ENCODE measurements at regions of chr6 and their contacts with region 1.

Region 1: DNA sequence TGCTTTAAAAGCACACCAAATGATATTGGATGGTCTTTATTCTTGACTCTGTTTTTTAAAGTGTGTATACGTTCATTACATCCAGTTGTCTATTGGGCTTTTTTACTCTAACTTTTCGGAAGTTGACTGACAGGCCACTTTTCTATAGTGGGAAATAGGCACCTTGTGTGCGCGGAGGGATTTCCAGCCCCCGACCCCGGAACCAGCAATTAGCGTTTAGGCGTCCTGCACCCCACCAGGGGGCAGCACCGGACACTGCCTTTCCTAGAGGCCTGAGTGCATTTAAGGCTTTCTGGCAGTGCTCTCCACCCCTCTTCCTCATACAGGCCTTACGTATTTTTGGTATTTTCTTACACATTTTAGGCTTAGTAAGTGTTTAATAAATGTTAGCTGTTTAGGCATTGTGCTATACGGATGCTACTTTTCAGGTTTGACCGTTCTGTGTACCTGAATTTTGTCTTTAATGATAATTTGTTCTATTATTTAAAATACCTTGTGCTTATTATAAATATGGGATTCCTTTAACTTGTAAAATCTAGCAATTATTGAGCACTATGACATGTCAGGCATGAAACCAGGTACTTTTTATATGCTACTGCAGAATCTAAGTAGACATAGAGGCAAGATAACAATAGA is 231.8 kb downstream of the BCKDHB start:
- DNase-seq: peak; percentile 70
- H3K4me3 Mint-ChIP-seq: no peak overlapping the region
- H3K27ac Mint-ChIP-seq: no peak overlapping the region
- H3K4me1 Mint-ChIP-seq: no peaks in the 10 kb centered on the region
- H3K27me3 Mint-ChIP-seq: no peaks in the 10 kb centered on the region

Region 2: DNA sequence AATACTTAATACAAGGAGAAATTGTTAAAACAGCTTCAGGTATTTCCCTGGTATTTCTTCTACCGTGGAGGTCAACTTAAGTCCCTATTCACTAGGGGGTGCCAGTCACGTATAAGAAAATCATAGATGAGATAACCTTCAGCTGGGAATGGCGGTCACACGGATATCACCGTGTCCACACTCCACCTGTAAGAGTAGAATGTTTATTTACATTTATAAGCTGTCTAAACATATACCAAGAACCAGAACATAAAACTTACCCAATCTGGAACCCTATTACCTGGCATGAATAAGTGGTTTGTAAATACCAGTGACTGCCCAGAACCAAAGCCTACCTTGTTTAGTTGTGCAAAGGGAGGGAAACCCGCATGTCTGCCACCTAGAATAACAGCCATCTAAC is 389.1 kb before region 1 on chr6:
- CTCF ChIA-PET with region 1: no interaction called
- intact Hi-C with region 1: loop called (anchors 10 kb)
- DNase-seq: peak; percentile 83
- H3K4me3 Mint-ChIP-seq: no peak overlapping the region
- H3K27ac Mint-ChIP-seq: no peak overlapping the region
- H3K4me1 Mint-ChIP-seq: peaks cover 14% of the 10 kb centered on the region
- H3K27me3 Mint-ChIP-seq: peaks cover 34% of the 10 kb centered on the region

Region 3: GRCh38 chr6:80133020-80133419 is 205.3 kb before region 1 on chr6:
- CTCF ChIA-PET with region 1: no interaction called
- intact Hi-C with region 1: loop called (anchors 10 kb)
- DNase-seq: peak; percentile 42
- H3K4me3 Mint-ChIP-seq: no peak overlapping the region
- H3K27ac Mint-ChIP-seq: no peak overlapping the region
- H3K4me1 Mint-ChIP-seq: no peaks in the 10 kb centered on the region
- H3K27me3 Mint-ChIP-seq: no peaks in the 10 kb centered on the region

Region 4: GRCh38 chr6:80214436-80215022 is 123.8 kb before region 1 on chr6:
- CTCF ChIA-PET with region 1: no interaction called
- intact Hi-C with region 1: loop called (anchors 5 kb)
- DNase-seq: peak; percentile 14
- H3K4me3 Mint-ChIP-seq: no peak overlapping the region
- H3K27ac Mint-ChIP-seq: no peak overlapping the region
- H3K4me1 Mint-ChIP-seq: peaks cover 5% of the 10 kb centered on the region
- H3K27me3 Mint-ChIP-seq: no peaks in the 10 kb centered on the region

Region 5: GRCh38 chr6:80282913-80283554 is 55.3 kb before region 1 on chr6:
- CTCF ChIA-PET with region 1: no interaction called
- intact Hi-C with region 1: no loop called
- DNase-seq: no peak
- H3K4me3 Mint-ChIP-seq: no peak overlapping the region
- H3K27ac Mint-ChIP-seq: no peak overlapping the region
- H3K4me1 Mint-ChIP-seq: peaks cover 18% of the 10 kb centered on the region
- H3K27me3 Mint-ChIP-seq: no peaks in the 10 kb centered on the region

Region 6: DNA sequence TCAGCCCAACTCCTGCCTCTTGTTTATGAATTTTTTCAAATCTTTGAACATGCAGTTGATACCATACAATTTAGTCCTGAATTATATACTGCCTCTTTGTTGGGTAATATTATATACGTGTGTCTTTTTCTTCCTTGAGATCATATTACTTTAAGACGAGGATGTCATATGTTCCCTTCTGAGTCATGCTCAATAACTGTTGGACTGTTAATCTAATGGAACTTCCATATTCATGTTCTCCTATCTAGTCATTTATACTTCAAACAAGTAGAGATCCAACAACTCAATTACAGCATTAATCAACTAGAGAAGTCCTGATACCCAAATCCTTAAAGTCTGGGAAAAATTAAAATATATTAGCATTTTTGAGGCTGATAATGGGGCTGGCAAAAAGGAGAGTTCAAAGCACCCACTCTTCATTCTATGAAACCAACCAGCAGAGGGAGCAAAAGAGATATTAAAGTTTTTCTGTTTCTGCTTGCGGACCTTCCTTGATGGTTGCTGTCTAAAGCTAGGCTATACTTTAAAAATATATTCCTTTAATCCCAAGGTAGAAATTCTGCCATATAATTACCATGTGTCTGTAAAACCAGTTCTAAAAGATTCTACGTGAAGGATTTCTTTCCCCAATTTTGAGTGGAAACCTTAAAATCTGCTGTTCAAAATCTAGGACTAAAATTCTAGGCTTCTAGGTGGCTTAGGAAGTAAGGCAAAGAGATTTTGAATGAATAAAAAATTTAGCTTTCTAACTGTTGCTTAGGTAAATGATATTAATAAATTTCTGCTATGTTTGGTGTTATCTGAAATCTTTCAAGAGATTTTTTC is 267.1 kb after region 1 on chr6:
- CTCF ChIA-PET with region 1: no interaction called
- intact Hi-C with region 1: loop called (anchors 1 kb)
- DNase-seq: no peak
- H3K4me3 Mint-ChIP-seq: no peak overlapping the region
- H3K27ac Mint-ChIP-seq: no peak overlapping the region
- H3K4me1 Mint-ChIP-seq: no peaks in the 10 kb centered on the region
- H3K27me3 Mint-ChIP-seq: peaks cover 14% of the 10 kb centered on the region

Region 7: DNA sequence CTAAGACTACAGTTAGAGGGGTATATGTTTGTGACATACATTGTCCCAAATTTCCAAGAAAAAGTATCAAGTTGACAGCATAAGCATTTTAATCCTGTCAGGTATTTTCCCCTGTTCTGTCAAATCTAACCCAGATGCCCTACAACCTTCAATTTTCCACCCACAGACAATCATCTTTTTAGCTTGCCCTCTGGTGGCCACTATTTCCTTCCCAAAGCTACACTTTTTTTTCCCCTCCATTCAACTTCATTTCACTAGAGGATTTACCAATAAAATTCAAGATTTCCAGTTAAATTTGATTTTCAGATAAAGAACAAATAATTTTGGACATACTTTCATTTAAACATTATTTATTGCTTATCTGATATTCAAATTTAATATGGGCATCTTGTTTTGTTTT is 1127.5 kb after region 1 on chr6:
- CTCF ChIA-PET with region 1: no interaction called
- intact Hi-C with region 1: loop called (anchors 10 kb)
- DNase-seq: no peak
- H3K4me3 Mint-ChIP-seq: no peak overlapping the region
- H3K27ac Mint-ChIP-seq: no peak overlapping the region
- H3K4me1 Mint-ChIP-seq: no peaks in the 10 kb centered on the region
- H3K27me3 Mint-ChIP-seq: no peaks in the 10 kb centered on the region

Region 8: GRCh38 chr6:82040405-82041221 is 1702.3 kb after region 1 on chr6:
- CTCF ChIA-PET with region 1: no interaction called
- intact Hi-C with region 1: loop called (anchors 5 kb)
- DNase-seq: peak; percentile 14
- H3K4me3 Mint-ChIP-seq: no peak overlapping the region
- H3K27ac Mint-ChIP-seq: no peak overlapping the region
- H3K4me1 Mint-ChIP-seq: no peaks in the 10 kb centered on the region
- H3K27me3 Mint-ChIP-seq: no peaks in the 10 kb centered on the region